Naive thymus-derived CD8-positive, alpha-beta T cell (primary cell): ENCODE measurements at regions of chr17 and their contacts with region 1.

Region 1: GRCh38 chr17:42193969-42194899 is at the start of gene GHDC:
- DNase-seq: peak; percentile 57 to 88 (median 74)
- ATAC-seq: peak; percentile 96 to 98
- H3K4me3 Mint-ChIP-seq: peak within 1 kb of the TSS; percentile 86 to 99 (median 96)
- H3K27ac Mint-ChIP-seq: peak within 1 kb of the TSS; percentile 84 to 96 (median 94)
- H3K4me1 Mint-ChIP-seq: peaks cover 16 to 35% (median 30%) of the 10 kb centered on the region in 4 donors
- H3K27me3 Mint-ChIP-seq: no peaks in the 10 kb centered on the region
- polyA plus RNA-seq, gene GHDC: 15.3 to 21.5 (median 17.3) TPM

Region 2: DNA sequence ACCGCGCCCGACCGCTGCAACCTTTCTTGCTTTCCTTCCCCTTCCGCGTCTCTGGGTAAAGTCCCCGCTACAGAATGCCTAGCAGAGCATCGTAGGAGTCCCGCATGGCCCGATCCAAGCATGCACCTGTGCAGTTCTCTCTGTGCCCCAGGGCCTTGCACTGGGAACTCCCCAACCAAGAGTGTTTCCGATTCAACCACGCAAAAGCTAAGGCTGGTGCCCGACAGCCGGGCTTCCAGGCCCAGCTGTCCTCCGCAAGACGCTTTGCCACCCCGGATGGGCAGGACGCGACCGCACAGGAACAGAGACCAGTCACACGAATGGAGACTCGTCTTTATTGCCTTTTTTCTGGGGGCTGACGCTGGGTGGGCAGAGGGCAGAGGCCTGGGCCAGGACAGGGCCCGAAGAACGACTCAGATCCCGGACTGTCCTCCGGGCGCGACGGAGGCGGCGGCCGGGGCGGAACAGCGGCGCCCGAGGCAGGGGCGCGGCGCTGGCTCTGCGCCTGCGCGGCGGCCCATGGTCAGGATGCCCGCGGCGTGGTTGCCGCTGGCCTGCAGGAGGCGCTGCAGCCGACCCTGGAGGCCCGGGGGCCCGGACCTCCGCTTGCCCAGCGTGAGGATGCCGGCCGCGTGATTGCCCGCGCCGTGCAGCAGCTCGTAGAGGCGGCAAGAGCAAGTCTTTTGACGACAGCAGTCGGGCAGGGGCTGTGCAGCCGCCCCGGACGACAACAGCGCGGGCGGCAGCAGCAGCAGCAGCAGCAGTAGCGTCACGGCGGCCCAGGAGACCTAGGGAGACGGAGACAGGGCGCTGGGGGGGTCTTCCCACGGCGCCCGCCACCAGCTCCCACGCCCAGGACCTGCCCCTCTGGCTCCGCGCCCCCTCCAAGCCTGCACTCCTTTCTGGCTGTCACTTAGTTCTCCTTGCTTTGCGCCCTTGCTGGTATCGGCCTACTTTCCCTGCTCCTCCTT is 10.2 kb before region 1 on chr17:
- POLR2A ChIA-PET with region 1: interaction called, 14 read pairs
- DNase-seq: peak; percentile 44 to 83 (median 74)
- ATAC-seq: peak; percentile 72 to 74
- H3K4me3 Mint-ChIP-seq: peak overlapping the region; percentile 78 to 97 (median 93)
- H3K27ac Mint-ChIP-seq: peak overlapping the region; percentile 83 to 94 (median 90)
- H3K4me1 Mint-ChIP-seq: peaks cover 12 to 45% (median 43%) of the 10 kb centered on the region in 4 donors
- H3K27me3 Mint-ChIP-seq: peaks cover 3 to 25% (median 7%) of the 10 kb centered on the region in 5 donors